SK-N-SH (cell line): ENCODE measurements at regions of chr19 and their contacts with region 1.

Region 1: GRCh38 chr19:13861732-13862531 is 15.0 kb upstream of the NANOS3 start:
- DNase-seq: peak; percentile 94
- H3K4me3 ChIP-seq: peak overlapping the region; percentile 39 to 61
- H3K27ac ChIP-seq: peak overlapping the region; percentile 82 to 98
- H3K4me1 ChIP-seq: peaks cover 9 to 20% of the 10 kb centered on the region in 2 experiments; a peak in 3 of 4 replicates
- H3K27me3 ChIP-seq: no peaks in the 10 kb centered on the region
- CTCF ChIP-seq: peak; percentile 91
- EP300 ChIP-seq: peak; percentile 14 to 69; a peak in 2 of 4 replicates
- RAD21 ChIP-seq: peak; percentile 95

Region 2: DNA sequence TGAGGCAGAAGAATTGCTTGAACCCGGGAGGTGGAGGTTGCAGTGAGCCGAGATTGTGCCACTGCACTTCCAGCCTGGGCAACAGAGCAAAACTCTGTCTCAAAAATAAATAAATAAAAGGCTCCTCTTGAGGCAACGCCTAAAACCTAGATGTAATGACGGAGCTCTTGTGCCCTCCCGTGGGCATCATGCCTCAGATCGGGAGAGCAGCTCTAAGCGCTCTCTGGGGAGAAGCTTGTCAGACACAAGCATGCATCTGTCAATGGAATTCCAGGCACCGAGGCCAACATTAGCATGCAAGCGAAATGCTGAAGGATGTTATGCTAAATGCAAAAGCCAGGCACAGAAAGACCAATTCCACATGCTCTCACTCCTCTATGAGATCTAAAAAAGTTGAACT is 143.2 kb before region 1 on chr19:
- CTCF ChIA-PET with region 1: no interaction called
- POLR2A ChIA-PET with region 1: no interaction called
- DNase-seq: peak; percentile 28
- H3K4me3 ChIP-seq: no peak overlapping the region
- H3K27ac ChIP-seq: no peak overlapping the region
- H3K4me1 ChIP-seq: no peaks in the 10 kb centered on the region
- H3K27me3 ChIP-seq: no peaks in the 10 kb centered on the region; the same call in 1 of the 2 replicates
- CTCF ChIP-seq: peak; percentile 63
- EP300 ChIP-seq: no peak
- RAD21 ChIP-seq: peak; percentile 61

Region 3: DNA sequence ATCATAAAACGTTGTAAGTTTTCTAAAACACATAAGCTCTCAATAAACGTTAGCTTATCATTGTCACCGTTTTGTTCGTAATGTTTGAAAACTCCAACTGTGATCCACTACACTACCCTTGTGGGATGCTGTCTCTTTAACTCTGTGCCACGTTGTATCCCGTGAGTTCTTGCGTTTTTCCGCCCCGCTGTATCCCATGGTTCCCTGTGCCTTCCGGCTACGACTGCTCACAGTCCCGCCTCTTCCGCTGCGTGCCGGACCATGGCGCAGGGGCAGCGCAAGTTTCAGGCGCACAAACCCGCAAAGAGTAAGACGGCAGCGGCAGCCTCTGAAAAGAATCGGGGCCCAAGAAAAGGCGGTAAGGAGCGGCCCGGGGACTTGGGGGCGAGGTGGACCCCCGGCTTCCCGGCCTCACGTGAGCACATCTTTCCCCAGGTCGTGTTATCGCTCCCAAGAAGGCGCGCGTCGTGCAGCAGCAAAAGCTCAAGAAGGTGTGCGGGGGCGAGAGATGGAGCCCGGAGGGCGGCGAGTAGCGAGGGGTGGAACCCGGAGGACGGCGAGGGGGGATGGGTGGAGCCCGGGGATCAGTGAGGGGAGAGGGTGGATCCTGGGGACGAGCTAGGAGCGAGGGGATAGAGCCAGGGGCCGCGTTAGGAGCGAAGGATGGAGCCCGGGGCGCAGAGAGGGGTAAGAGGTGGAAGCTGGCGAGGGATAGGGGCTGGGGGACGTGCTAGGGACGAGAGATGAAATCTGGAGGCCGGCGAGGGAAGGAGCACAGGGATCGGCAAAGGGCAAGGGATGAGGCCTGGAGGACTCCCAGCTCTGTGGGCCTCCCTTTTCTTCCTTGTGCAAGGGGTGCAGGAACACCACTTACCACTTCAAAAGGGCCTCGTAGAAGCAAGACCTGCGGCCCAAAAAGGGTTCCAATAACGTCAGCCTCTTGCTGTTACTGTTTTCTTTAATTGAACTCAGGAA is 87.4 kb before region 1 on chr19 and contains the start of gene C19orf53:
- CTCF ChIA-PET with region 1: interaction called, 15 read pairs
- POLR2A ChIA-PET with region 1: interaction called, 3 read pairs
- DNase-seq: peak; percentile 93
- H3K4me3 ChIP-seq: peak within 1 kb of the TSS; percentile 74 to 94
- H3K27ac ChIP-seq: peak within 1 kb of the TSS; percentile 83 to 91
- H3K4me1 ChIP-seq: peaks cover 6 to 8% of the 10 kb centered on the region in 2 experiments; a peak in 2 of 4 replicates
- H3K27me3 ChIP-seq: no peaks in the 10 kb centered on the region
- CTCF ChIP-seq: no peak
- EP300 ChIP-seq: no peak
- RAD21 ChIP-seq: no peak
- polyA plus RNA-seq, gene C19orf53: 470 and 554 TPM in 2 replicates

Region 4: DNA sequence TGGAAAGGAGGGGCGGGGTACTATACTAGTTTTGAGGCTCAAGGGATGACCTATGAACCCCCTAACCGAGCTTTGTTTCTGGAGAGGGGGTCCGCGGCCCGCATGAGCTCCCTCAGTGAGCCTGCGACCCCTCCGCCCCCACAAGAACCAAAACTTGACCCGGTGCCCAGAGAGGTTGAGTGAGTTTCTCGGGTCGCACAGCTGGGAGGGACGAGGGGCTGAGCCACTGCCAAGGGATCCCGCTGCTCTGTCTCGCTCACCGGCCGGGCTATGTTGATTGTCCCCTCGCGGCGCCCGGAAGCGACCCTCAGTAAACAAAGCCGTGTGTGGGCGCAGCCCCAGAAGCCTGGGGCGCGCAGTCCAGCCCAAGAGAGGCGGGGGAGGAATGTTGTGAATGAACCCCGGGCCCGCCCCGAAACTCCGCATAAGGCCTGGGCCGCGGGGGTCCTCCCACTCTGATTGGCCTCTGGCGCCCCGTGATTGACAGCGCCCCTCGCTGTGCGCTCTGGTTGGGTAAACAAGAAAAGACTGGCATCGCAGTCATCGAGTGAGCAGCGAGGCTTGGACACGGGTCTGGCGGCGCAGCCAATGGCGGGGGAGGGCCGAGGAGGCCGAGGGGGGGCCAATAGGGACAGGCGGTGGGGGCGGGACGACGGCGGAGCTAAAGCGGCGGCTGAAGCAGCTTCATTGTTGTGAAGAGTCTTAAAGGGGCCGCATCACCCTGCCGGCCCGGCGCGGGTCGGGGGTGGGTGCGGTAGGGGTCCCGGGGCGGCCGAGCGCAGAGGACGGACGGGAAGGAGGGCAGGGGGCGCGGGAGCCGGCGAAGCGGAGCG is 67.0 kb before region 1 on chr19 and contains the start of gene ZSWIM4:
- CTCF ChIA-PET with region 1: interaction called, 14 read pairs
- POLR2A ChIA-PET with region 1: no interaction called
- DNase-seq: peak; percentile 98
- H3K4me3 ChIP-seq: peak within 1 kb of the TSS; percentile 76 to 98
- H3K27ac ChIP-seq: peak within 1 kb of the TSS; percentile 88 to 99
- H3K4me1 ChIP-seq: peaks cover 15 to 18% of the 10 kb centered on the region in 2 experiments; a peak in 3 of 4 replicates
- H3K27me3 ChIP-seq: no peaks in the 10 kb centered on the region
- CTCF ChIP-seq: no peak
- EP300 ChIP-seq: no peak
- RAD21 ChIP-seq: no peak
- polyA plus RNA-seq, gene ZSWIM4: 3.5 and 4.7 TPM in 2 replicates

Region 5: DNA sequence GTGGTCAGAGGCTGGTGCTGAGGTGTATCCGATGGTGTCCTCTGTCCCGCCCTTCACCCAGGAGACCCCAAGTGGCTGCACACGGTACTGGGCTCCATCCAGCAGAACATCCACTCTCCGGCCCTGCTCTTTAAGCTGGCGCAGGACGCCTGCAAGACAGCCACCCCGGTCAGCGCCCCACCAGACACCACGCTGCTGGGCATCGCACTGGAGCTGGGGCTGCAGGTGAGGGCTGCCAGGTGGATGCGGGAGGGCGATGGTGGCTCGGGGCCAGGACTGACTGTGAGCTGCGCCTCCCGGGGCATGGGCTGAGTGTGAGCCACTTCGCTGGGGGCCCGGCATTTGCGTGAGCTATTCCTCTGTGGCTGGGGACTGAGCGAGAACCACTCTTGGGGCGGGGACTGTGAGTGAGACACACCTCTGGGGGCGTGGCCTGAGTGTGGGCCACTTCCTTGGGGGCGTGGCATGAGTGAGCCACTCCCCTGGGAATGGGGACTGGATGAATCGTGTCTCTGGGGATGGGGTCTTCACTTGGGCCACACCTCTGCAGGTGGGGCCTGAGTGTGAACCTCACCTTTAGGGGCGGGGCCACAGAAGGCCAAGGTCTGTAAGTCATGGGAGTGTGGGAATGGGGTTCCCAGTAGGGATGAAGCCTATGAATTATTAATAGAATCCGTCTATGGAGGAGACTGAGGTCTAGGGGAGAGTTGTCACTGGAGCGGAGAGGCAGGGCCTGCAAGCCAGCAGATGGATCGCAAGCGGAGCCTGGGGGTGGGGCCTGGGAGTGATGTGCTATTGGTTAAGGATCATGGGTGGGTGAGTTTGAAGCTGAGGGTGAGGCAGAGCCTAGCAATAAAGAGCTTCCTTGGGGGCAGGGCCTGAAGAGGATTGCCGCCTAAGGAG is 36.2 kb before region 1 on chr19:
- CTCF ChIA-PET with region 1: interaction called, 11 read pairs
- POLR2A ChIA-PET with region 1: no interaction called
- DNase-seq: peak; percentile 80
- H3K4me3 ChIP-seq: no peak overlapping the region
- H3K27ac ChIP-seq: no peak overlapping the region
- H3K4me1 ChIP-seq: peaks cover 0 to 8% of the 10 kb centered on the region in 2 experiments; a peak in 2 of 4 replicates
- H3K27me3 ChIP-seq: no peaks in the 10 kb centered on the region
- CTCF ChIP-seq: peak; percentile 38; the same call in 1 of the 2 replicates
- EP300 ChIP-seq: no peak
- RAD21 ChIP-seq: no peak

Region 6: DNA sequence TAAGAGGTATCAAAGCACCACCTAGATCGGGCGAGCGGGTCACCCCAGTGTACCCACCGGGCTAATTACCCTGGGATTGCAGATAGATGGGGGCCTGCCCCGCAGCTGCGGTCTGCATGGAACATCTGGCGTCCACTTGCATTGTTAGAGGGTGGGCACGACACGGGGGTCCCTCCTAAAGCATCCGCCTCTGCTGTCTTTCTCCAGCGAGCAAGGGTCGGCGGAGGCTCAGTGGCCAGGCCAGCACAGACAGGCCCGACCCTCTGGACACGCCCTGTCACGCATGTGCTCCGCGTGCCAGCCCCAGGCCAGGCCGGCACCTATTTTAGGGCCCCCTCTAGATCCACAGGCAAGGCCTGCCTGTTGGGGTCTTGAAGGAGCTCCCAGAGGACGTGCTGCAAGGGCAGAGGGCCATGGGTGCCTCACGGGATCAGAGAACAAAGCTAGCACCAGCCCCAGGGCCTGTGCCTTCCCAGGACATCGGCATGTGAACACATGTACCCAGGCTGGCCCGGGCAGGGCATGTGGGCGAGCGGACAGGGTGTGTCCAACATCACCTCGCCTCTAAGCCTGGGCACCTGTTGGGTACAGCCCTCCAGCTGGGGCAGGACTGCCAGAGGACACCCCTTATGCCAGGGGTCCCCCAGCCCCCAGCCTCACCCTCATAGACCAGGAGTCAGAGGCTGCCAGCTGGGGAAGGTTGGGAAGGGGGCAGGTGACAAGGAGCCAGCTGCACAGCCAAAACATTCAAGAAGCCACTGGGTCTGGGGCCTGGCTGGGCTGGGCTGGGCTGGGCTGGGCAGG is 20.6 kb before region 1 on chr19:
- CTCF ChIA-PET with region 1: interaction called, 61 read pairs
- POLR2A ChIA-PET with region 1: interaction called, 9 read pairs
- DNase-seq: peak; percentile 50
- H3K4me3 ChIP-seq: peak overlapping the region; percentile 77 to 82
- H3K27ac ChIP-seq: peak overlapping the region; percentile 97 to 99
- H3K4me1 ChIP-seq: peaks cover 45 to 60% of the 10 kb centered on the region in 2 experiments
- H3K27me3 ChIP-seq: no peaks in the 10 kb centered on the region
- CTCF ChIP-seq: no peak
- EP300 ChIP-seq: no peak
- RAD21 ChIP-seq: no peak

Region 7: GRCh38 chr19:13920940-13921761 is 59.2 kb after region 1 on chr19:
- CTCF ChIA-PET with region 1: no interaction called
- POLR2A ChIA-PET with region 1: no interaction called
- DNase-seq: peak; percentile 77
- H3K4me3 ChIP-seq: no peak overlapping the region
- H3K27ac ChIP-seq: no peak overlapping the region
- H3K4me1 ChIP-seq: no peaks in the 10 kb centered on the region
- H3K27me3 ChIP-seq: no peaks in the 10 kb centered on the region
- CTCF ChIP-seq: no peak
- EP300 ChIP-seq: no peak
- RAD21 ChIP-seq: no peak